B cell (primary cell): ENCODE measurements at regions of chr18 and their contacts with region 1.

Region 1: GRCh38 chr18:79378542-79379250 is 17.0 kb upstream of the NFATC1 start:
- DNase-seq: peak; percentile 88
- ATAC-seq: peak; percentile 68
- H3K4me3 ChIP-seq: no peak overlapping the region
- H3K4me3 Mint-ChIP-seq: no peak overlapping the region
- H3K27ac ChIP-seq: no peak overlapping the region
- H3K27ac Mint-ChIP-seq: peak overlapping the region; percentile 27
- H3K4me1 ChIP-seq: peaks cover 14 to 22% of the 10 kb centered on the region in 2 donors
- H3K4me1 Mint-ChIP-seq: peaks cover 20% of the 10 kb centered on the region
- H3K27me3 ChIP-seq: no peaks in the 10 kb centered on the region
- H3K27me3 Mint-ChIP-seq: no peaks in the 10 kb centered on the region
- CTCF ChIP-seq: peak; percentile 89

Region 2: DNA sequence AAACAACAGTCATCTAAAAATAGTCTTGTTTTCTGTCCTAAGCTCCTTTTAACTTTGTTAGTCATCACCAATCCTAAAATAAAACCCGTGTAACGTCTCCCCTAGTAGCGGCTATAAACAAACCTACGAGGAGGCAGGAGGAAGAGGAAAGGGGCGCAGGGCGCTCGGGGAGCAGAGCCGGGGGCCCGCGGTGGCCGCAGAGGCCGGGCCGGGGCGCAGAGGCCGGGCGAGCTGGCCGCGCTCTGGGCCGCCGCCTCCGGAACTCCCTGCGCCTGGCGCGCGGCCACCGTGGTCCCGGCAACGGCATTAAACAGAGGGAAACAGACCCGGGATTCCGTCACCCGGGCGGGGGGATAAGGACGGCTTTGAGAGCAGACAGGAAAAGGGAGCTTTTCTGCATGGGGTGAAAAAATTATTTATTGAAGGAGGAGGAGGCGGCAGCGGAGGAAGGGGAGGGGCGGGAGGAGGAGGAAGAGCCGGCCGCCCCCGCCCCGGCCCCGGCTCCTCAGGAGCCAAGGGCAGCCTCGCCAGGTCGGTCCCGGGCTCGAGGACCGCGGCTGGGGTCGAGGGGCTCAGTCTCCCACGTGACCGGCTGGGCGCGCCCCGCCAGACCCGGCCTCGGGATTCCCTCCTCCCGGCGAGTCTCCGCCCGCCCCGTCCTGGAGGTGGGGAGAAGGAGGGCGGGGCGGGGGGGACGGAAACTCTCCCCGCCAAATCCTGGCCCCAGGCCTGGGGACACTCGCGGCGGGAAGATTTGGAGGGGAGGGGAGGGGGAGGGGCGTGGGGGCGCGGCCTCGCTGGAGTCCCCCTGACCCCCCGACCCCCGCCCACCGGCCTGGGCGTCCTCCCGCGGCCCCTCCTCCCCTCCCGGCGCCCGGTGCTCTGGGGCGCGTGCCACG is 15.2 kb after region 1 on chr18:
- CTCF ChIA-PET with region 1: interaction called, 55 read pairs
- POLR2A ChIA-PET with region 1: interaction called, 5 read pairs
- intact Hi-C with region 1: no loop called
- DNase-seq: peak; percentile 65
- ATAC-seq: peak; percentile 18
- H3K4me3 ChIP-seq: peak overlapping the region in 4 of 5 experiments; percentile 42 to 78 (median 60)
- H3K4me3 Mint-ChIP-seq: peak overlapping the region; percentile 85
- H3K27ac ChIP-seq: peak overlapping the region; percentile 49 to 66
- H3K27ac Mint-ChIP-seq: peak overlapping the region; percentile 74
- H3K4me1 ChIP-seq: peaks cover 38 to 45% of the 10 kb centered on the region in 2 donors
- H3K4me1 Mint-ChIP-seq: peaks cover 36% of the 10 kb centered on the region
- H3K27me3 ChIP-seq: peaks cover 0 to 3% (median 0%) of the 10 kb centered on the region in 4 experiments
- H3K27me3 Mint-ChIP-seq: no peaks in the 10 kb centered on the region
- CTCF ChIP-seq: no peak

Region 3: GRCh38 chr18:79439201-79440023 is 60.7 kb after region 1 on chr18:
- CTCF ChIA-PET with region 1: interaction called, 10 read pairs
- POLR2A ChIA-PET with region 1: no interaction called
- intact Hi-C with region 1: no loop called
- DNase-seq: peak; percentile 35
- ATAC-seq: no peak
- H3K4me3 ChIP-seq: no peak overlapping the region
- H3K4me3 Mint-ChIP-seq: no peak overlapping the region
- H3K27ac ChIP-seq: peak overlapping the region in 1 of 2 donors; percentile 46
- H3K27ac Mint-ChIP-seq: peak overlapping the region; percentile 50
- H3K4me1 ChIP-seq: peaks cover 38 to 83% of the 10 kb centered on the region in 2 donors
- H3K4me1 Mint-ChIP-seq: peaks cover 76% of the 10 kb centered on the region
- H3K27me3 ChIP-seq: no peaks in the 10 kb centered on the region
- H3K27me3 Mint-ChIP-seq: no peaks in the 10 kb centered on the region
- CTCF ChIP-seq: no peak

Region 4: DNA sequence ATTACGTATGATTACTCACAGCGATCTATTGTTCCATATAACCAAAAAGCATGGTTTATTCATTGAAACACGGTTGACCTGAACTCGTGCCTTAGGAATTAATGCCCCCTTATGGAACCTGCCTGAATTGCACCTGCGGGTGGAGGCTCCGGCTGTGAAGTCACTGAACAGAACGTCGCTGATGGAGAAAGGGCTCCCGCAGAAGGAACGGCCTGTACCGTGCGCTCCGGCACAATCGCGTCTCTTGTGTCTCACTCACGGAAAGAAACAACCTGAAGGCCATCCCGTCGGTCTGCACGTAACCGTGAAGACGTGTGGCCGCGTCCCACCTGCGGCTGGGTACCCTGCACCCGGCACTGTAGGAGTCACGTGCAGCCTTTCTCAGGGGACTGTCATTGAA is 150.2 kb after region 1 on chr18:
- CTCF ChIA-PET with region 1: interaction called, 201 read pairs
- POLR2A ChIA-PET with region 1: interaction called, 4 read pairs
- intact Hi-C with region 1: loop called (anchors 1 kb)
- DNase-seq: peak; percentile 83
- ATAC-seq: peak; percentile 34
- H3K4me3 ChIP-seq: no peak overlapping the region
- H3K4me3 Mint-ChIP-seq: no peak overlapping the region
- H3K27ac ChIP-seq: no peak overlapping the region
- H3K27ac Mint-ChIP-seq: no peak overlapping the region
- H3K4me1 ChIP-seq: peaks cover 15 to 24% of the 10 kb centered on the region in 2 donors
- H3K4me1 Mint-ChIP-seq: peaks cover 26% of the 10 kb centered on the region
- H3K27me3 ChIP-seq: no peaks in the 10 kb centered on the region
- H3K27me3 Mint-ChIP-seq: no peaks in the 10 kb centered on the region
- CTCF ChIP-seq: peak; percentile 94

Region 5: DNA sequence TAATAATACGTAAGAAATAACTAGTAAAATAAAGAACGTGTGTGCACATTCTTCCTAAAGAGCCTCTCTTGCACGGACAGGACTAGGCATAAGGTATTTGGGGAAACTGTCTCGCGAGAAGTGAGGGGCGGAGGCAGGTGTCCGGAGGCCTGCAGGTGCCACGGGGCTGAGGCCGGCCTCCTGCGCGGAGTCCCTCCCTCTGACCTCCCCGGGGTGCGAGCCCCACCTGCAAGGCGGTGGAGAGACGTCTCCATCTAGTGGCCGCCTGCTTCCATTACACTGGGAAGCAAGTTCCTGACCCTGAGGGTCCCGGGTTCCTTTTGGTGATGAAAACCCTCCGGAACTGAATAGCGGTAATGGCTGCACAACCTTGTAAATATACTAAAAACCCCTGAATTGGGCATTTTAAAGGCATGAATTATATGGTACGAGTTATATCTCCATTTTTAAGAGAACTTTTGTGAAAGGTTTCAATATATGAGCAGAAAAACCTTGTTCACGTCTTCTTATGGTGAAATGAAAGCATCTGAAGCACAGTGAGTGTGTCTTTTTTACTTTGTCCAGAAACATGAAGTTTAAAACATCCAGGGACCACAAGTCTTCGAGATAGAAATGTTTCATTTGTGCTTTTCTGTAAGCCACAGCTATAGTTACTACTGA is 265.4 kb after region 1 on chr18:
- CTCF ChIA-PET with region 1: interaction called, 175 read pairs
- POLR2A ChIA-PET with region 1: interaction called, 5 read pairs
- intact Hi-C with region 1: loop called (anchors 1 kb)
- DNase-seq: peak; percentile 82
- ATAC-seq: peak; percentile 94
- H3K4me3 ChIP-seq: no peak overlapping the region
- H3K4me3 Mint-ChIP-seq: no peak overlapping the region
- H3K27ac ChIP-seq: no peak overlapping the region
- H3K27ac Mint-ChIP-seq: peak overlapping the region; percentile 15
- H3K4me1 ChIP-seq: peaks cover 15 to 22% of the 10 kb centered on the region in 2 donors
- H3K4me1 Mint-ChIP-seq: peaks cover 20% of the 10 kb centered on the region
- H3K27me3 ChIP-seq: no peaks in the 10 kb centered on the region
- H3K27me3 Mint-ChIP-seq: no peaks in the 10 kb centered on the region
- CTCF ChIP-seq: peak; percentile 99